Heart left ventricle (tissue), 16 donors: ENCODE measurements at regions of chr4 and their contacts with region 1.

Region 1: DNA sequence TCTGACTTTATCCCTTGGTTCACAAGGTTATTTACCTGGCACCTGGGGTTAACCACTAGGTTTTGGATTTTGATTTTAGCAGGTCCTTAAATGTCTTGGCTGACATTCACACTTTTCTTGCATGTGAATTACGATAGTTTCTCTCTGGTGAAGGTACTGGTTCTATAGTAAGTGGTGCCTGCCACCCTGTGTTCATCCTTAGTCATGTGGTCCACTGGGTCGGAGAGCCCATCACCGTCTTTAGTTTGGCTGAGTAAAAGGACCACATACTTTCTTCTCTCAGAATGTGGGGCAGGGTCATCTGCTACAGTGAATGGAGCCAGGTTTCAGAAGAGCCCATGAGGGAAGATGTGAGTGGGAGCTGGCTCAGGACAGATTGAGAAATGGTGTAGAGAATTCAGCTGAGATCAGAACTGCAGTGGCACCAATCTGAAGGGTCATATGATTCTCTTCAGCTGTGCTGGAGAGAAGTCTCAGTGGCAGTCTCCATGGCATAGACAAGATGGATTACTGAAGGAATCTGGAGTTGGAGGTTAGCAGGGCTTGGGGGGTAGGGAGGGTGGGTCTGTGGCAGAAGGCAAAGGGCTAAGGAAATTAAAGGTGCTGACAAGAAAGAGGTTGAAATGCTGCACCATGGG is 310.4 kb downstream of the GPAT3 start:
- DNase-seq: peak in 1 of 5 donors; percentile 18
- ATAC-seq: no peak
- H3K4me3 ChIP-seq: no peak overlapping the region
- H3K27ac ChIP-seq: no peak overlapping the region
- H3K4me1 ChIP-seq: no peaks in the 10 kb centered on the region
- H3K27me3 ChIP-seq: peaks cover 0 to 6% (median 0%) of the 10 kb centered on the region in 9 donors
- CTCF ChIP-seq: peak in 2 of 12 donors; percentile 14 to 22
- POLR2A ChIP-seq: no peak

Region 2: GRCh38 chr4:83054928-83055327 is 791.4 kb before region 1 on chr4:
- intact Hi-C with region 1: no loop called
- DNase-seq: no peak
- ATAC-seq: no peak
- H3K4me3 ChIP-seq: no peak overlapping the region
- H3K27ac ChIP-seq: no peak overlapping the region
- H3K4me1 ChIP-seq: no peaks in the 10 kb centered on the region
- H3K27me3 ChIP-seq: no peaks in the 10 kb centered on the region
- CTCF ChIP-seq: peak in 3 of 12 donors; percentile 13 to 26 (median 24)
- POLR2A ChIP-seq: no peak

Region 3: DNA sequence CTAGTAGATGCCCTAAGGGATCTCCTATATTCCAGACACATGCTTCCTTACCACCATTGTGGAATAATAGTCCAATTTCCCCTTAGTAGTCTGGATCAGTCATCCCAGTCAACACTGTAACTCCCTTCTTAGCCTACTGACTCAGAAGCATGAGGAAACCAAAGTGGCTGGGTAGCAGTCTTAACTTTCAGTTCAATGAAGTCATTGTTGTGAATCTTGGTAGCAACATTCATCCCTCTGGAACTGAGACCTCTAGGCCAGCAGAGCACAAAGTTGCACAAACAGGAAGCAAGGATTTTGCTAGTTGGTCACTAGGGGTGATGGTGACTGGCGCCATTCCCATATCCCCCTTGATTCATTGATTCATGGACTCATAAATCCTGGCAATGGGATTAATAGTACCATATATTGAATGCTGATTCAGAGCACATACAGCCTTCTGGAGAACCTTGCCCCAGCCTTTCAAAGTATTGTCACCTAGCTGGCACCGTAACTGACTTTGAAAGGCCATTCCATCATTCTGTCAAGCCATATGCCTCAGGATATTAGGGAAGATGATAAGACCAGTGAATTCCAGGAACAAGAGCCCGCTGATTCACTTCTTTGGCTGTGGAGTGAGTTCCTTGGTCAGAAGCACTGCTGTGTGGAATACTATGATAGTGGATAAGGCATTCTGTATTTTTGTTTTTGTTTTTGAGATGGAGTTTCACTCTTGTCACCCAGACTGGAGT is 330.1 kb before region 1 on chr4:
- intact Hi-C with region 1: no loop called
- DNase-seq: no peak
- ATAC-seq: peak in 2 of 4 donors; percentile 46 to 72
- H3K4me3 ChIP-seq: no peak overlapping the region
- H3K27ac ChIP-seq: no peak overlapping the region
- H3K4me1 ChIP-seq: no peaks in the 10 kb centered on the region
- H3K27me3 ChIP-seq: no peaks in the 10 kb centered on the region
- CTCF ChIP-seq: no peak
- POLR2A ChIP-seq: no peak

Region 4: DNA sequence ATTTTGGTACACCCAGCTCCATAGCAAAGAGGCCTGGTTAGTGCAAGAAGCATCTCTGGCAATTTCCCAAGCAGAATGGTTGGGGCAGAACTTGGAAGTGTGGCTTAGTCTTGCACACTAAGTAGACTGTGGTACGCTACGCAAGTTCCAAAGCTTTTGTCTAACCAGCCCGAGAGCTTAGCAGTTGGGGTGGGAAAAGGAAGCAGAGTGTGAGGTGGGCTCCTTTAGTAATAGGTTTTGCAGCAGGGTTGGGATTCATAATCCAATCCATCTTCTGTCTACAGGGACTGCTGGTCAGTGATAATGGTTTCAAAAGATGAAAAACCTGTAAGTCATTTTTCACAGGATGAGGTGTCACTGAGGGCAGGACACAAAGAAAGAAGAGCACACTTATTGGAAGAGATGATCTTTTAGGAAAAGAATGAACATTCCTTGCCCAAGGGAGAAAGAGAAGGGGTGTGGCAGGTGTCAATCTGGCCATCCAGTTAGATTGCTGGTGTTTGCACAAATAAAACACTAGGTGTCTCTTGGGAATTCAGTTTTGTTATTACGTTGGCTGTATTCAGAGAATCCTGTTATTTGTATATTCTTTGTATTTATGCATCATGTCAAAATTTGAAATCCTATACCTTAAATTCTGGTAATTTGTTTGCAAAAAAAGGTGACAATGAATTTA is 66.1 kb before region 1 on chr4:
- intact Hi-C with region 1: loop called in 2 of 10 experiments (anchors 5 kb)
- DNase-seq: no peak
- ATAC-seq: no peak
- H3K4me3 ChIP-seq: no peak overlapping the region
- H3K27ac ChIP-seq: no peak overlapping the region
- H3K4me1 ChIP-seq: no peaks in the 10 kb centered on the region
- H3K27me3 ChIP-seq: no peaks in the 10 kb centered on the region
- CTCF ChIP-seq: no peak
- POLR2A ChIP-seq: no peak